Posterior cingulate gyrus (tissue), 11 donors: ENCODE measurements at regions of chr9 and their contacts with region 1.

Region 1: GRCh38 chr9:97982683-97983588 is at the start of gene ANP32B:
- DNase-seq: peak; percentile 82 to 98 (median 90)

Region 2: GRCh38 chr9:97632985-97633858 is 349.7 kb before region 1 on chr9 and contains the starts of genes NCBP1 and TSTD2:
- intact Hi-C with region 1: loop called (anchors 10 kb)
- DNase-seq: peak; percentile 94 to 100 (median 98)

Region 3: DNA sequence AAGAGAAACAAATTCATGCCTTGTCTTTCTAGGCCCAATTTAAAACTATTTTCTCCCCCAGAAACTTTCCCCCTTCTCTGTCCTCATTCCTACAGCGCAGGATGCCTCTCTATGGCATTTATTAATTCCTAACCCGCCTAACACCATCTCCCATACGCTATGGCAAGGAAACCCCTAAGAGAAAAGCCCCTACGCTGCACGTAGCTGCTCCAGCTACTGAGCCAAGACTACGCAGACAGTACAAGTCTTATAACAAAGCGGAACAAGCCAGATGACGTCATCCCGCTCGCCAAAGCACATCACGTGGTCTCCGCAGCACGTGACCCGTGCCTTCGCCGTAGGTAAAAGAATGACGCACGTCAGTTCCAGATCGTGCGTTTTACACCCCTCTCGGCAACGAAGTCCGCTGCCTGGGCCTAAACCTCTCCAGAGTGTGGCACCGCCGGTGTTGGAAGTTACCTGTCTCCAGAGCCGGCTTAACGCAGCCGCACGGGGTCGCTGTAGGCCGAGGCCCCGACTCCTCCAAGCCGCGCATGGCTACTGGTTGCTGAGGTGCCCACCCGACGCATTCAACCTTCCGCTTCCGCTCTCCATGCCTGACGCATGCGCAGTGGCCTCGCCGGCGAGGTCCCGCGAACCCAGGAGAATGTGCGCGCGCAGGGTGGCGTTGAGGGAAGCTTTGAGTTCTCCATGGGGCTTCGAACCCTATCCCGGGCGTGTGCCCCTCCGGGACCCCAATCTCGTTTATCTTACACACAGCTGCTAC is 60.8 kb before region 1 on chr9 and contains the start of gene TRMO:
- intact Hi-C with region 1: loop called (anchors 2 kb)
- DNase-seq: peak; percentile 92 to 99 (median 95)

Region 4: GRCh38 chr9:98034593-98035546 is 51.9 kb after region 1 on chr9:
- intact Hi-C with region 1: loop called (anchors 2 kb)
- DNase-seq: peak; percentile 37 to 95 (median 83)

Region 5: GRCh38 chr9:98255578-98256296 is 272.8 kb after region 1 on chr9 and contains the start of gene TBC1D2:
- intact Hi-C with region 1: loop called (anchors 2 kb)
- DNase-seq: peak; percentile 89 to 99 (median 93)